WTC11 (cell line): ENCODE measurements at regions of chr12 and their contacts with region 1.

Region 1: GRCh38 chr12:97148941-97149559 is 242.0 kb downstream of the NEDD1 start:
- DNase-seq: peak; percentile 85
- ATAC-seq: peak; percentile 100
- H3K4me3 Mint-ChIP-seq: no peak overlapping the region
- H3K27ac Mint-ChIP-seq: no peak overlapping the region
- H3K4me1 Mint-ChIP-seq: peaks cover 12% of the 10 kb centered on the region
- H3K27me3 Mint-ChIP-seq: no peaks in the 10 kb centered on the region
- CTCF ChIP-seq: peak; percentile 78

Region 2: DNA sequence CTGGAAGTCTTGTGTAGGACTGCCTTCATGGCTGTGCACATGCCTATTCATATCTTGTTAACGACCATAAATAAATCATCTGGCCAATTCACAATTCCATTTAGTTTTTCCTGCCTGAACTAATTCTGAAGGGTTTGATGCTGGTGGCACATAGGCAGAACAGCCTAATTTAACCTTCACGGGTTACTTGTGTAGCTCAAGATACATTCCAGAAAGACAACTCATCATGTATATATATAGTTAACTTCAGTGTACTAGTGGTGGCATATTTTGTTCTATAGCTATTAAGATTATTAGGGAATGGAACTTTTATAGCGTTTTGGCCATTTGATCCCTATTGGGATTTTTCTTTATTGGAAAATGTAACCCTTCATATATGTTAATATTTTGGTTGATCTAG is 628.3 kb before region 1 on chr12:
- CTCF ChIA-PET with region 1: no interaction called
- POLR2A ChIA-PET with region 1: no interaction called
- DNase-seq: no peak
- ATAC-seq: no peak
- H3K4me3 Mint-ChIP-seq: no peak overlapping the region
- H3K27ac Mint-ChIP-seq: no peak overlapping the region
- H3K4me1 Mint-ChIP-seq: peaks cover 21% of the 10 kb centered on the region
- H3K27me3 Mint-ChIP-seq: no peaks in the 10 kb centered on the region
- CTCF ChIP-seq: no peak

Region 3: GRCh38 chr12:97131220-97131981 is 17.6 kb before region 1 on chr12:
- CTCF ChIA-PET with region 1: interaction called, 12 read pairs
- POLR2A ChIA-PET with region 1: no interaction called
- DNase-seq: peak; percentile 41
- ATAC-seq: peak; percentile 92
- H3K4me3 Mint-ChIP-seq: peak overlapping the region; percentile 49
- H3K27ac Mint-ChIP-seq: peak overlapping the region; percentile 97
- H3K4me1 Mint-ChIP-seq: peaks cover 61% of the 10 kb centered on the region
- H3K27me3 Mint-ChIP-seq: peaks cover 12% of the 10 kb centered on the region; the same call in 1 of the 2 replicates
- CTCF ChIP-seq: no peak

Region 4: GRCh38 chr12:97168804-97169203 is 19.8 kb after region 1 on chr12:
- CTCF ChIA-PET with region 1: interaction called, 10 read pairs
- POLR2A ChIA-PET with region 1: no interaction called
- DNase-seq: no peak
- ATAC-seq: peak; percentile 87
- H3K4me3 Mint-ChIP-seq: no peak overlapping the region
- H3K27ac Mint-ChIP-seq: no peak overlapping the region
- H3K4me1 Mint-ChIP-seq: peaks cover 8% of the 10 kb centered on the region
- H3K27me3 Mint-ChIP-seq: no peaks in the 10 kb centered on the region
- CTCF ChIP-seq: no peak

Region 5: GRCh38 chr12:97404543-97404942 is 255.5 kb after region 1 on chr12:
- CTCF ChIA-PET with region 1: interaction called, 25 read pairs
- POLR2A ChIA-PET with region 1: no interaction called
- DNase-seq: peak; percentile 65
- ATAC-seq: peak; percentile 97
- H3K4me3 Mint-ChIP-seq: no peak overlapping the region
- H3K27ac Mint-ChIP-seq: no peak overlapping the region
- H3K4me1 Mint-ChIP-seq: peaks cover 12% of the 10 kb centered on the region
- H3K27me3 Mint-ChIP-seq: no peaks in the 10 kb centered on the region
- CTCF ChIP-seq: peak; percentile 72